ENCODE measurements at regions of chr19 and their contacts with region 1.

Region 1: DNA sequence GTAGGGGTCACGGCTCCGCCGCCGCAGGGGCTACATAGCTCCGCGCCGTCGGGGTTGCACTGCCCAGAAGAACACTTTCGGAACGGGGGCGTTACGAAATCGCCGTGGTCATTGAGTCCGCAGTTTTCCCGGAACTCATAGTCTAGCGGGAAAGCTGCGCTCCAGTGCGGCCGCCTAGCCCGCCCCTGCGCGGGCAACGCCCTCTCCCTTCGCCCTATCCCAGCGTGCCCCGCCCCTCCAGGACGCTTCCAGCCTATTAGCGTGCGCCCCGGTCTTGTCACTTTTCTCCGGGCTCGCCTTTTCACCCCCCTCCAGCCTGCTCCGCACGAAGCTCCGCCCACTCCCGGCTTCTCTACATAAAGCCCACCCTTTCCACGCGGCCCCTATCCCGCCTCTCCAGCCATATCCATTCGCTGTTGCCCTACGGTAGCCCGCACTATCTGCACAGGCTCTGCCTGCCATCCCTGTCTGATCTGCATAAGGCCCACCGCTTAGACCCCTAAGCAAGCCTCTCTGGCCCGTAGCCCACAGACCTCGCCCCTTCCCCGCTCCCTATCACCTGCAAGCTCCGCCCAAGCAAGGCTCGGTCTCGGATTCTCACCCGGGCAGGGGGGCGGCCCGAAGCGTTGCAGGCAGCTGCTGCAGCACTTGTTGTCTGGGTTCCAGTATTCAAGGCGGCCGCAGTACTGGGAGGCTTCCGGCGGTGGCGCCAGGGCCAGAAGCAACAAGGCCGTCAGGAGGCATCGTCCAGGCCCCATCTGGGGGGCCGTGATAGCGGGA is 1.6 kb downstream of the IGFLR1 start:
- DNase-seq: peak; percentile 85 to 98 (median 94)
- ATAC-seq: peak; percentile 66 to 71 (median 66)
- H3K4me3 ChIP-seq: peak overlapping the region; percentile 68 to 82
- H3K4me3 Mint-ChIP-seq: peak overlapping the region; percentile 87 to 97 (median 92)
- H3K27ac ChIP-seq: peak overlapping the region; percentile 87
- H3K27ac Mint-ChIP-seq: peak overlapping the region; percentile 93 to 94
- H3K4me1 ChIP-seq: peaks cover 14 to 72% of the 10 kb centered on the region in 2 experiments
- H3K4me1 Mint-ChIP-seq: peaks cover 52 to 66% (median 64%) of the 10 kb centered on the region in 3 donors
- H3K27me3 ChIP-seq: no peaks in the 10 kb centered on the region
- H3K27me3 Mint-ChIP-seq: no peaks in the 10 kb centered on the region

Region 2: GRCh38 chr19:35702223-35703012 is 38.2 kb before region 1 on chr19:
- CTCF ChIA-PET with region 1: interaction called in 1 of 2 experiments, 18 read pairs
- POLR2A ChIA-PET with region 1: no interaction called
- DNase-seq: peak; percentile 77 to 97 (median 91)
- ATAC-seq: peak; percentile 99 to 100 (median 100)
- H3K4me3 ChIP-seq: peak overlapping the region; percentile 62 to 76
- H3K4me3 Mint-ChIP-seq: peak overlapping the region; percentile 85 to 97 (median 95)
- H3K27ac ChIP-seq: peak overlapping the region; percentile 40
- H3K27ac Mint-ChIP-seq: peak overlapping the region; percentile 90 to 97
- H3K4me1 ChIP-seq: peaks cover 0 to 16% of the 10 kb centered on the region in 2 experiments
- H3K4me1 Mint-ChIP-seq: peaks cover 4 to 6% (median 5%) of the 10 kb centered on the region in 3 donors
- H3K27me3 ChIP-seq: peaks cover 0 to 7% of the 10 kb centered on the region in 2 experiments
- H3K27me3 Mint-ChIP-seq: peaks cover 0 to 2% of the 10 kb centered on the region in 2 donors

Region 3: DNA sequence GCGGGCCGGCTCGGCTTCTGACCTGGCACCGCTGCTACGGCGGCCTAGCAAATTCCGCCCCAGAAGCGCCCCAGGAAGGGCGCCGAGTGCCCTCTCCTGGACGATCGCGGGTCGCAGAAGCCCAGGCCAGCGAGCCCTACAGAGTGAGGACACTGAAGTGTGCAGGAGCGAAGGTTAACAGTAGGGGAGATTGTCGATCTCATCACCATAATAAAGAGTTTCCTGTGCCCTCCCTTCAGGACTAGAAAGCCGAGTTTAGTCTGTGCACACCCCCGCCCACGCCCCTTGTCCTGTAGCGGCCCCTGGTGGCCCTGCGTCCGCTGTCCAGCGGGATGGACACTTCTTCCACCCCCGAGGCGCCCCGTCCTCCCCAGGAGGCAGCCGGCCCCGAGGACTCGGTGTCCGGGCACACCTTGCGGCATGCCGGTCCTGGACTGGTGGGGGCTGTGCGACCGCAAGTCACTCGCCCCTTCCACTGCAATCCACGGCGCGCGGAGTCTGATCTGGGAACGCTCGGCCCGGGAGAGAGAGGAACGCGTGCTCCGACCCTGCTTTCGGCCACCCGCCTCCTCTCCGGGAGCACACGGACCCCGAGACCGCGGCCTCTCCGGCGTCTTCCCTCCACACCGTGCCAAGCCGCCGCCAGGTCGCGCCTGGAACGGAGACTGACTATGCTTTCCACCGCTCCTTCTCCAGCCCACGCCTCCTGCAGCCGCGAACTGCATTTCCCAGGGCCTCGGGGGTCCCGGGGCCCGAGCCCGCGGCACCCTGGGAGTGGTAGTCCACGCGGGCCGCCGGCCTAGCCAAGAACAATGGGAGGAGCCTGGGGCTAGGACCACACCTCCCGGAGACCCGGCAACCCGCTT is 23.6 kb before region 1 on chr19:
- CTCF ChIA-PET with region 1: no interaction called
- POLR2A ChIA-PET with region 1: no interaction called
- DNase-seq: peak; percentile 89 to 99 (median 97)
- ATAC-seq: peak; percentile 83 to 88 (median 86)
- H3K4me3 ChIP-seq: peak overlapping the region; percentile 84 to 85
- H3K4me3 Mint-ChIP-seq: peak overlapping the region; percentile 90 to 100 (median 91)
- H3K27ac ChIP-seq: peak overlapping the region; percentile 74
- H3K27ac Mint-ChIP-seq: peak overlapping the region; percentile 94
- H3K4me1 ChIP-seq: peaks cover 16 to 73% of the 10 kb centered on the region in 2 experiments
- H3K4me1 Mint-ChIP-seq: peaks cover 61 to 68% (median 67%) of the 10 kb centered on the region in 3 donors
- H3K27me3 ChIP-seq: no peaks in the 10 kb centered on the region
- H3K27me3 Mint-ChIP-seq: no peaks in the 10 kb centered on the region

Region 4: DNA sequence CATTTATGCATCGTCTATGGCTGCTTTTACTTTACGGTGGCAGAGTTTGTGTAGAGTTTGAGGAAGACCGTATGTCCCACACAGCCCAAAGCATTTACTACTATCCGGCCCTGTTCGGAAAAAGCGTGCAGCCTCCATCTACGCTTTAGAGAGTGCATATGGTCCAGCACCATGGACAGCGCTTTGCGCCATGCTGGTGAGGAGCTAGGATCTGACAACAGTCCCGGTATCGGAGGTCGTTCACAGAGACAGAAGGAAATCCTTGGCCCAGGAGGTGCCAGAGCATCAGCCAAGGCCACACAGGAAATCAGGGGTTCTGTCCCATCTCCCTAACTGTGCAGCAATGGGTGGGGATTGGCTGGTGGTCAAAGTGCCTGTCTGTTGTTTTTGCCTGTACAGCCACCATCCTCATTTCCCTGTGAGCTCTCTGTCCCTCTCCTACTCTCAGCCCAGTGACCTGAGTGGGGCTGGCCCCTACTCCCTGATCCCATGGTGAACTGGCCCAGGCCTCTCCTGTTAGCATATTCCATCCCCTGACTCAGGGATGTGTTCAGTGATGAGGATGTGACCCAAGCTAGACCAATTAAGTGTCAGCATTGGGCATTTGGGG is 88.2 kb after region 1 on chr19:
- CTCF ChIA-PET with region 1: no interaction called
- POLR2A ChIA-PET with region 1: interaction called in 1 of 2 experiments, 11 read pairs
- DNase-seq: peak in 27 of 35 experiments; percentile 13 to 68 (median 37)
- ATAC-seq: peak in 1 of 4 experiments; percentile 61
- H3K4me3 ChIP-seq: no peak overlapping the region
- H3K4me3 Mint-ChIP-seq: no peak overlapping the region
- H3K27ac ChIP-seq: no peak overlapping the region
- H3K27ac Mint-ChIP-seq: no peak overlapping the region
- H3K4me1 ChIP-seq: no peaks in the 10 kb centered on the region
- H3K4me1 Mint-ChIP-seq: no peaks in the 10 kb centered on the region
- H3K27me3 ChIP-seq: peaks cover 0 to 55% of the 10 kb centered on the region in 2 experiments
- H3K27me3 Mint-ChIP-seq: peaks cover 25 to 59% of the 10 kb centered on the region in 2 donors

Measured in T-cell (primary cell).